ENCODE measurements at regions of chr3 and their contacts with region 1.

Region 1: DNA sequence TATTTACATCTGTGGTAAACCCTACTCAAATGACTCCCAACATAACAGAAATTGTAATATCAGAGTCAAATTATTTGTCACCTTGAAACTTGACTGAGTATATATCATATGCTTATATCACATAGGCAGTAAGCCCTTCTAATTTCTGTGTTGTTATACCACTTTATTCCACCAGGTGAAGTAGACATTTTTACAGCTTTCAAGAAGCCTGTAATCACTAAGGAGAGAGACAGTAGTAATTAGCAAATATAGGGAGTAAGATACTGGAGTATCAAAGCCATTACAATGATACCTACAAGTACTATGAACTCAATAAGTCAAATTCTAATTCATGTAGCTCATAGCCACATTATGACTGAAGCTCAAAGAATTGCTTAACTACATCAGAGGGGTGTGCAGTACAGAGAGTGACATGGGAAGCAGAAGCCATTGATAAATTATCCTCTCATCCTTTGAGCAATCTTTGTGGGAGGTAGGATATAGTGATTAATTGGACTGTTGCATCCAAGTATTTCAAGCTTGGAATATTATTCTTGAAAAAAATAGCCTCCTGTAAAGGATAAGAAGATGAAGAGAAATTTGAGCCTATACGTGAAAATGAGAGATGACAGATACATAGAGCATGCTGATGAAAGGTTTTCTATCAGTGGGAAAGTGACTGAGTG is 1005.9 kb downstream of the ZPLD1 start:
- DNase-seq: peak; percentile 10
- ATAC-seq: peak; percentile 44; the same call in 1 of the 2 replicates
- H3K4me3 ChIP-seq: no peak overlapping the region
- H3K27ac ChIP-seq: no peak overlapping the region
- H3K4me1 ChIP-seq: no peaks in the 10 kb centered on the region
- H3K27me3 ChIP-seq: no peaks in the 10 kb centered on the region
- CTCF ChIP-seq: peak; percentile 27; the same call in 1 of the 2 replicates
- POLR2A ChIP-seq: no peak
- RAD21 ChIP-seq: no peak

Region 2: GRCh38 chr3:103410231-103410630 is 30.4 kb before region 1 on chr3:
- CTCF ChIA-PET with region 1: no interaction called
- POLR2A ChIA-PET with region 1: no interaction called
- dilution Hi-C with region 1: no loop called
- in situ Hi-C with region 1: no loop called
- intact Hi-C with region 1: no loop called
- DNase-seq: no peak
- ATAC-seq: no peak
- H3K4me3 ChIP-seq: no peak overlapping the region
- H3K27ac ChIP-seq: no peak overlapping the region
- H3K4me1 ChIP-seq: no peaks in the 10 kb centered on the region
- H3K27me3 ChIP-seq: no peaks in the 10 kb centered on the region
- CTCF ChIP-seq: no peak
- POLR2A ChIP-seq: no peak
- RAD21 ChIP-seq: no peak

Region 3: DNA sequence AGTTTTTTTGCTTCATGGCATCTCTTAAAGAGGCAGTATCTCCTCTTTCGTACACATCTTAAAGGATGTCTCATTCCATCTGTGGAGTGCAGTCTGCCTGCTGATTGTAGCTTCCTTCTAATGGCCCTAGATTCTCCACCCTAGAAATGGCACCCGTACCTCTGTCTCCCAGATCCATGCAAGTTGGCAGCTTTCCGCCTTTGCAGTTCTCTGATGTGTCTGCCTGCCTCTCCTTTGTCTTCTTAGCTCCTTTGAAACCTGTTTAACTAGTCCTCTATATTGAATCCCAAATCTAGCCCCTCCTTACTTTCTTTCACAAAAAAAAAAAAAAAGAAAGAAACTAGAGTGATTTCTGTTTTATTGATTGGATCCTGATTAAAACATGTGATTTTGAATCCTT is 19.1 kb after region 1 on chr3:
- CTCF ChIA-PET with region 1: no interaction called
- POLR2A ChIA-PET with region 1: no interaction called
- dilution Hi-C with region 1: no loop called
- in situ Hi-C with region 1: no loop called
- intact Hi-C with region 1: loop called (anchors 1 kb)
- DNase-seq: no peak
- ATAC-seq: no peak
- H3K4me3 ChIP-seq: no peak overlapping the region
- H3K27ac ChIP-seq: no peak overlapping the region
- H3K4me1 ChIP-seq: no peaks in the 10 kb centered on the region
- H3K27me3 ChIP-seq: no peaks in the 10 kb centered on the region
- CTCF ChIP-seq: no peak
- POLR2A ChIP-seq: no peak
- RAD21 ChIP-seq: no peak

Region 4: GRCh38 chr3:104018541-104018940 is 577.9 kb after region 1 on chr3:
- CTCF ChIA-PET with region 1: no interaction called
- POLR2A ChIA-PET with region 1: no interaction called
- dilution Hi-C with region 1: no loop called
- in situ Hi-C with region 1: no loop called
- intact Hi-C with region 1: no loop called
- DNase-seq: no peak
- ATAC-seq: no peak
- H3K4me3 ChIP-seq: no peak overlapping the region
- H3K27ac ChIP-seq: no peak overlapping the region
- H3K4me1 ChIP-seq: no peaks in the 10 kb centered on the region
- H3K27me3 ChIP-seq: no peaks in the 10 kb centered on the region
- CTCF ChIP-seq: no peak
- POLR2A ChIP-seq: no peak
- RAD21 ChIP-seq: no peak